ENCODE measurements at regions of chr5 and their contacts with region 1.

Region 1: GRCh38 chr5:39376293-39376714 is 12.0 kb upstream of the C9 start:
- DNase-seq: peak; percentile 51
- ATAC-seq: peak; percentile 60
- H3K4me3 Mint-ChIP-seq: no peak overlapping the region
- H3K27ac Mint-ChIP-seq: no peak overlapping the region
- H3K4me1 Mint-ChIP-seq: no peaks in the 10 kb centered on the region
- H3K27me3 Mint-ChIP-seq: peaks cover 2% of the 10 kb centered on the region

Region 2: DNA sequence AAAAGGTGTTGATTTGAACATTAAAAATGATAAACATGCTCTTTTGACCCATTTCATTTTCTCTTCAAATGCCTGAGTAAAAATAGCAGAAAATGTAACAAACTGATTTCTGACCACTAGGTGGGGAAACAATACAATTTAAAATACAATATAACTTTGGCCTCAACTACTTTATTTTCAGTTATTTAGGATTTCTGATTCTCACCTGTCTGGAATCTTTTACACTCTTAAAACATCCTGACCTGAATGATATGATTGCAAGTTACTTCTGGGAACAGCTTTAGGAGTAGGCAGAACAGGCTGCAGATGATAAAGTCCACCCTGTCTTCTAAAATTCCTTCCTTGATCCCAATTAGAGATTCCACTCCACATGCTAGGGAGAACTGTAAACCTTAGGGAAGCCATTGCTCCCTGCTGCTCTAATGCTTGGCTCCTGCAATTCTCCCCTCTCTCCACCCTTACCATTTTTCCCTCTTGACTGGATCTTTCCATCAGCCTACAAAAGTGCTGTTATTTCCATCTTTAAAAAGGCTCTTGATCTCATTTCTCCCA is 227.2 kb before region 1 on chr5:
- CTCF ChIA-PET with region 1: no interaction called
- POLR2A ChIA-PET with region 1: no interaction called
- intact Hi-C with region 1: loop called in 1 of 2 experiments (anchors 10 kb)
- DNase-seq: no peak
- ATAC-seq: no peak
- H3K4me3 Mint-ChIP-seq: no peak overlapping the region
- H3K27ac Mint-ChIP-seq: peak overlapping the region; percentile 85
- H3K4me1 Mint-ChIP-seq: peaks cover 75% of the 10 kb centered on the region
- H3K27me3 Mint-ChIP-seq: no peaks in the 10 kb centered on the region

Region 3: DNA sequence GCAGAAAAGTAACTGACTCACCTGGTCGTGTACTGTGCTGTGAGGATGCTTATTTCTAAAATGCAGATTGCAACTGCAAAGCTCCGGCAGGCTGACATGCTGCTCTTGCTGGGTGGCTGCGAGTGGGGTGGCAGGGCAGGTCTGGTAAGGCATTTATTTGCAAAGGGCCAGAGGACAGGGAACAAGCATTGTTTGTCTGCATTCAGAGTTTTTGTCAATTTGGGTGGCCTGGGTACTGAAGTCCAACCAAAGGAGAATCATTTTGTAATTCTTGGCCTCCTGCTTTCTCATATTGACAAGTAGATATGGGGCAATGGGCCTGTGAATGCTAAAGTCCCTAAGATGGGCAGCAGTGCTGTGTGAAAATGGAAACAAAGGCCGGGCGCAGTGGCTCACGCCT is 11.9 kb before region 1 on chr5 and contains the start of gene C9:
- CTCF ChIA-PET with region 1: interaction called, 15 read pairs
- POLR2A ChIA-PET with region 1: no interaction called
- intact Hi-C with region 1: no loop called
- DNase-seq: no peak
- ATAC-seq: no peak
- H3K4me3 Mint-ChIP-seq: no peak within 1 kb of the TSS
- H3K27ac Mint-ChIP-seq: no peak within 1 kb of the TSS
- H3K4me1 Mint-ChIP-seq: peaks cover 5% of the 10 kb centered on the region
- H3K27me3 Mint-ChIP-seq: no peaks in the 10 kb centered on the region
- total RNA-seq, gene C9: not detected

Region 4: DNA sequence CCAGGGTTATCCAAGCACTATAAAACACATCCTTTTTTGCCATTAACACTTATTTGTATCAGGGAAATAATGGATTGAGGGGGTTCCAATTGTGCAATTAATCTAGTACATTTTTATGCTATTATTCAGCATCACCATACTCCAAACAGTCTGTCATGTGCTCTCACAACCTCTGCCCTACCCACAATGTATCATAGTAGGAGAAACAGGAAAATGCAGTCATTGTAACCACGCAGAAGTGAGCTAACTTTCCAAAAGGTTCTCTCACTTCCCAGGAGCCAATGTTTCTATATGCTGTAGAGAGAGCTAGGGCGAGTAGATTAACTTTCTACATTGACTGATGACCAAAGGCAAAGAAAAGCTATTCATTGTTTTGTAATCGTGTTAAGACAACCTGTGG is 18.6 kb after region 1 on chr5:
- CTCF ChIA-PET with region 1: interaction called, 21 read pairs
- POLR2A ChIA-PET with region 1: no interaction called
- intact Hi-C with region 1: no loop called
- DNase-seq: no peak
- ATAC-seq: no peak
- H3K4me3 Mint-ChIP-seq: no peak overlapping the region
- H3K27ac Mint-ChIP-seq: no peak overlapping the region
- H3K4me1 Mint-ChIP-seq: peaks cover 4% of the 10 kb centered on the region
- H3K27me3 Mint-ChIP-seq: no peaks in the 10 kb centered on the region

Region 5: GRCh38 chr5:39424736-39425637 is 48.7 kb after region 1 on chr5 and contains the start of gene DAB2:
- CTCF ChIA-PET with region 1: interaction called, 22 read pairs
- POLR2A ChIA-PET with region 1: no interaction called
- intact Hi-C with region 1: no loop called
- DNase-seq: peak; percentile 70
- ATAC-seq: peak; percentile 88
- H3K4me3 Mint-ChIP-seq: peak within 1 kb of the TSS; percentile 68
- H3K27ac Mint-ChIP-seq: no peak within 1 kb of the TSS
- H3K4me1 Mint-ChIP-seq: no peaks in the 10 kb centered on the region
- H3K27me3 Mint-ChIP-seq: peaks cover 42% of the 10 kb centered on the region
- total RNA-seq, gene DAB2: 0.05 to 0.26 TPM

Region 6: GRCh38 chr5:39547553-39548154 is 171.3 kb after region 1 on chr5:
- CTCF ChIA-PET with region 1: interaction called, 48 read pairs
- POLR2A ChIA-PET with region 1: no interaction called
- intact Hi-C with region 1: loop called (anchors 1 kb)
- DNase-seq: peak; percentile 7
- ATAC-seq: no peak
- H3K4me3 Mint-ChIP-seq: no peak overlapping the region
- H3K27ac Mint-ChIP-seq: no peak overlapping the region
- H3K4me1 Mint-ChIP-seq: peaks cover 4% of the 10 kb centered on the region
- H3K27me3 Mint-ChIP-seq: peaks cover 9% of the 10 kb centered on the region

Region 7: DNA sequence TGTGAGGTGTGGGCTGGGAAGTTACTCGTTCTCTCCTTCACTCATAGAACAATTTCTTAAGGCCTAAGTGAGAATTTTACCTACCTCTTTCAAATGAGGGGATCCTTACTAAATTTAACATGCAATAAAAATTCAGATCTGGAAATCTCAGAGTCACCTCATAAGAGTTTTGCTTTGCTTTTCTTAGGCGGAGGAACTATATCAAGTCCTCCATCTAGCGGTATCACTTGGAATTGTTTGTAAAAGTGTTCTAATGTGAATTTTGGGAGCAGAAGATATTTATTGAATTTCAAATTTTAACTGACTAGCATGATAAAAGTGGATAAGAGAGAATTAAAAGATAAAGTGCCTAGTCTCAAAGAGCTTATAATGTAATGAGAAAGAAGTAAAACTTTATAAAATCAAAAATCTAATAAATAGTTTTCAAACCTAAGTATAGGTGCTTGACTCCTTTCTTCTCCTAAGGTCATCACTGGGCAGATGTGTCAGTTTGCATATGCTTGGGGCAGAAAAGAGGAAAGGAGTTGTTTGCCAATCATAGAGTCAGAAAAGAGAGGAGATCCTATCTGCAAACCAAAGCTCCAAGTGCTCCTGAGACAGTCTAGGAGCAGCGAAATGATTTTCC is 194.2 kb after region 1 on chr5:
- CTCF ChIA-PET with region 1: interaction called, 25 read pairs
- POLR2A ChIA-PET with region 1: no interaction called
- intact Hi-C with region 1: loop called (anchors 1 kb)
- DNase-seq: no peak
- ATAC-seq: no peak
- H3K4me3 Mint-ChIP-seq: no peak overlapping the region
- H3K27ac Mint-ChIP-seq: no peak overlapping the region
- H3K4me1 Mint-ChIP-seq: no peaks in the 10 kb centered on the region
- H3K27me3 Mint-ChIP-seq: peaks cover 4% of the 10 kb centered on the region